Activated CD8-positive, alpha-beta T cell treated with anti-CD3 and anti-CD28 coated beads, Interleukin-2, amount 10 ng/mL, durations not matched to agents 7 days and 5 days (primary cell): ENCODE measurements at regions of chr4 and their contacts with region 1.

Region 1: DNA sequence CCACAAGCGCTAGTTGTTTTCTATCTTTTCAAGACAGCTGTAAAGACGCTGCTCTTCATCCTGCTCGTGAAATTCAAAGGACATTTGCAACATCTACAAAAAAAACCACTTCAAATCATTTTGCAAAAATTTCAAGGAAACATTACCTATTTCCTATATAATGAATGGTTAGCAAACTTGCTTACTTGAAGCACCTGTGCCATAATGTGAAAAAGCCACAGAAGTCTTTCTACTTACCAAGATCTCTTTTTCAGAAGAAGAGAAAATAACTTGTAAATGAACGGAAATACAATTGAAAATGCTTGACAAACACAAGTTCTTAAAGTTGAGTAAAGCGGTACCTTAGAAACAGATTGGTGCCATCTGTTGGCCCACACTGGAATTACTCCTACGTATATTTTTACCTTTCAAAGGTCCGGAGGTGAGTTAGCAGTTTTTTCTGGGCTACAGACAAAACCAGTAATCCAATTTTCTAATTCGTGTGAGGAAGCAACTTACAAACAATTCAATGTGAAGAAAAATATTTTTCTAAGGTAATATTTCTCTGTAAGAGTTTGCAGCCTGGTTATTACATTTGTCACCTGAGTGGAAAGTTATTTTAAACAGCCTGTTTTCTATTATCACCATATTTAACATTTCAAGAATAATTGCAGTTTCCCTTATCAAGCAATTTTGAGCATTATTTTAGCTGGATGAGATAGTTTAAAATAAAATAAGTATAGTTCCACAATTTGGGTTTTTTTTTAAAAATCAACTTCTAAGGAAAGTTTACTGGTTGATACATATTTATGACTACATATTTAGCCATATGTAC is at the start of gene TLR6:
- DNase-seq: peak; percentile 88
- ATAC-seq: peak; percentile 56
- H3K4me3 Mint-ChIP-seq: peak within 1 kb of the TSS; percentile 83
- H3K27ac Mint-ChIP-seq: peak within 1 kb of the TSS; percentile 95
- H3K4me1 Mint-ChIP-seq: peaks cover 42% of the 10 kb centered on the region
- H3K27me3 Mint-ChIP-seq: peaks cover 5% of the 10 kb centered on the region
- total RNA-seq, gene TLR6: 3.1 to 3.2 TPM

Region 2: DNA sequence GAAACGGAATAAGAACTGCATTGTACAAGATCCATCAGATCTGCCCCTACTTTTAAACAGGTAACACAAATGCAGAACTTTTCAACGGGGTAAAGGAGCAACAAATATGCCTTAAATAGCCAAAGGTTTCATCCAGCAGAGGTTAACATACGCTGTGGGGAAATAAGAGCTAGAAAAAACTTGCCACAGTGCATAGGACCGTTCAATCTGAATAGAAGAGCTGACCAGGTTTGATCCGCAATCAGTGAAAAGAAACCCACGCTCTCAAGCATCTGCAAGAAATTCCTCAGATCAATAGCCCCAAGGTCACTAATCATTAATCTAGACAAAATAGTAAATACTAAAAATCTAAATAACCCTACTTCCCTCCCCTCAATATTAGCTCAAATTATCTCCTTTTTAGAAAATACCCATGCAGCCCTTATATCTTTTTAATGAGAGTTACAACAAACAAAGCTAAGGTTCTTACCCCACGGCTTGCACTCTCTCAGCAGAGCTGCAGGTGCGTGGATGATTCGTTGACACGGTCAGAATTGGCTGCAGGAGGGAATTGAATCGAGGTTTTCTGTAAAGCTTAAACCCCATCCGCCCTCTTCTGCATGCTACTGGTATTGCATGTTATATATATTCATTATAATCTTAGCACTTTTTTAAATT is 74.2 kb before region 1 on chr4 and contains the start of gene TLR10:
- CTCF ChIA-PET with region 1: interaction called, 35 read pairs
- POLR2A ChIA-PET with region 1: no interaction called
- DNase-seq: peak; percentile 64
- ATAC-seq: peak; percentile 47
- H3K4me3 Mint-ChIP-seq: no peak within 1 kb of the TSS
- H3K27ac Mint-ChIP-seq: no peak within 1 kb of the TSS
- H3K4me1 Mint-ChIP-seq: peaks cover 6% of the 10 kb centered on the region
- H3K27me3 Mint-ChIP-seq: peaks cover 5% of the 10 kb centered on the region
- total RNA-seq, gene TLR10: 0.08 TPM in 1 of 2 experiments, not detected in the other

Region 3: DNA sequence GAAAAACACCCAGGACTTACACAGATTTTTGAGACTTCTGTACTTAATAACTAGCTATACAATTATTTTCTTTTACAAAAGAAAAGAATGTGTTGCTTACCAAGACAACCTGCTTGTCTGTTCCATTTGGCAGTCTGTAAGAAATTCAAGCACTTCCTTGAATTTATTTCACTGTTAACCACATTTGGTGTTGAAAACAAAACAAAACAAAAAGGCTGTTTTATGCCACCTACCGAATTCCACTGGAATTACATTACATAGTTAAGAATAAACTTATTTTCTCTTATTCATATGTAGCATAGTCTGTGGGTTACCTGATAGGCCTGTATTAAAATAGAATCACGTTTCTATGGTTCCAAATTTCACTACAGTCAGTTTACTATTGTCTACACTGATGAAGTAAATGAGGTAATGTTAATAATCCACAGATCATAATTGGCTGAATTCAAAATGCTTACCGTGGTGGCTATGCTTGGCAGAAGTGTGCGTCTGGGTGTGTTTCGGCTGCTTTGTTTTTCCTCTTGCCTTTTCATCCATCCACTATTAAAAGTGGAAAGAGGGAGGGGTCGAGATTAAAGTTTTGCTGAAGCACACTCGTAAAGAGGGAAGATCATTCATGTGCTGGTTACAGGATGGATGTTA is 52.0 kb before region 1 on chr4 and contains the start of gene TLR1:
- CTCF ChIA-PET with region 1: interaction called, 25 read pairs
- POLR2A ChIA-PET with region 1: interaction called, 6 read pairs
- DNase-seq: peak; percentile 32
- ATAC-seq: peak; percentile 78
- H3K4me3 Mint-ChIP-seq: peak within 1 kb of the TSS; percentile 76
- H3K27ac Mint-ChIP-seq: peak within 1 kb of the TSS; percentile 84
- H3K4me1 Mint-ChIP-seq: peaks cover 25% of the 10 kb centered on the region
- H3K27me3 Mint-ChIP-seq: no peaks in the 10 kb centered on the region
- total RNA-seq, gene TLR1: 8.1 to 9.6 TPM

Region 4: GRCh38 chr4:38872604-38873006 is 15.9 kb after region 1 on chr4:
- CTCF ChIA-PET with region 1: interaction called, 38 read pairs
- POLR2A ChIA-PET with region 1: no interaction called
- DNase-seq: no peak
- ATAC-seq: no peak
- H3K4me3 Mint-ChIP-seq: no peak overlapping the region
- H3K27ac Mint-ChIP-seq: no peak overlapping the region
- H3K4me1 Mint-ChIP-seq: peaks cover 22% of the 10 kb centered on the region
- H3K27me3 Mint-ChIP-seq: peaks cover 42% of the 10 kb centered on the region

Region 5: GRCh38 chr4:38889143-38889542 is 32.4 kb after region 1 on chr4:
- CTCF ChIA-PET with region 1: interaction called, 21 read pairs
- POLR2A ChIA-PET with region 1: no interaction called
- DNase-seq: no peak
- ATAC-seq: peak; percentile 60
- H3K4me3 Mint-ChIP-seq: peak overlapping the region; percentile 16
- H3K27ac Mint-ChIP-seq: peak overlapping the region; percentile 33
- H3K4me1 Mint-ChIP-seq: peaks cover 16% of the 10 kb centered on the region
- H3K27me3 Mint-ChIP-seq: no peaks in the 10 kb centered on the region

Region 6: DNA sequence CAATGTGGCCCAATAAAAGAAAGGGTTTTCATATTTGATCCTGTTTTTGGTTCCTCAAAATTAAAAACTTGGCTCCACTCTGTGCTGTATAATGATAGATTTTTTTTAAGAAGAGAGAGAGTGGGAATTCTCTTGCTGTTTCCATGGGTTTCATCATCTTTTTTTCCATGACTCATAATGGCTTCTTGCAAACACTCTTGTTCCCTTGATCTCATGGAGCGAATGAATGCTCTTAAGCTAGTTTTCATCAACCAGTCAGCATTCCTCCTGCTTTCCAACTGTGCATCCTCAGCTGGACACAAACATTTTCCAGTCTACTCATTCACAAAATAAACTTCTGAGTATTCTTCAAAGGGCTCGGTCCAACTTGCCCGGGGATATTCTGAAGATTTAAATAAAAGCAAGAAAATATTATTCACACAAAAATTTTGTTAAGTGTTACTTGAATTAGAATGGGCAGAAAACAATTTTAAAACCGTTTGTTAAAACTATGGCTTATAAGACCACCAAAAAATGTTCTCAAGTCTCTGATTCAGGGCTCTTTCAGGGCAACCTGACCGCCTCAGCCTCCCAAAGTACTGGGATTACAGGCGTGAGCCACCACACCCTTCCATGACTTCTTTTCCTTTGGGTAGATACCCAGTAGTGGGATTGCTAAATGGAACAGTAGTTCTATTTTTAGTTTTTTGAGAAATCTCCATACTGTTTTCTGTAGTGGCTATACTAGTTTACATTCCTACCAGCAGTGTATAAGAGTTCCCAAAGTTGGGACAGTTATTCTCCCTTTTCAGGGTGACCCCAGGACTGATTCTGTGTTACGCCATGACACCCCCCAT is 110.7 kb after region 1 on chr4:
- CTCF ChIA-PET with region 1: no interaction called
- POLR2A ChIA-PET with region 1: no interaction called
- DNase-seq: no peak
- ATAC-seq: no peak
- H3K4me3 Mint-ChIP-seq: no peak overlapping the region
- H3K27ac Mint-ChIP-seq: peak overlapping the region; percentile 14
- H3K4me1 Mint-ChIP-seq: peaks cover 3% of the 10 kb centered on the region
- H3K27me3 Mint-ChIP-seq: no peaks in the 10 kb centered on the region

Region 7: GRCh38 chr4:38995670-38996005 is 138.9 kb after region 1 on chr4:
- CTCF ChIA-PET with region 1: no interaction called
- POLR2A ChIA-PET with region 1: no interaction called
- DNase-seq: no peak
- ATAC-seq: no peak
- H3K4me3 Mint-ChIP-seq: no peak overlapping the region
- H3K27ac Mint-ChIP-seq: no peak overlapping the region
- H3K4me1 Mint-ChIP-seq: no peaks in the 10 kb centered on the region
- H3K27me3 Mint-ChIP-seq: no peaks in the 10 kb centered on the region